Common myeloid progenitor, CD34-positive (primary cell): ENCODE measurements at regions of chr1 and their contacts with region 1.

Region 1: GRCh38 chr1:19240673-19241538 is 10.4 kb downstream of the EMC1 start:
- DNase-seq: peak; percentile 61 to 80 (median 77)
- H3K4me3 ChIP-seq: no peak overlapping the region
- H3K27ac ChIP-seq: peak overlapping the region in 1 of 2 experiments; percentile 67
- H3K4me1 ChIP-seq: peaks cover 0 to 2% (median under 1%) of the 10 kb centered on the region in 4 experiments
- H3K27me3 ChIP-seq: no peaks in the 10 kb centered on the region

Region 2: GRCh38 chr1:19087737-19088594 is 152.9 kb before region 1 on chr1:
- CTCF ChIA-PET with region 1: no interaction called
- POLR2A ChIA-PET with region 1: no interaction called
- DNase-seq: peak in 2 of 3 donors; percentile 25 to 36
- H3K4me3 ChIP-seq: no peak overlapping the region
- H3K27ac ChIP-seq: no peak overlapping the region
- H3K4me1 ChIP-seq: no peaks in the 10 kb centered on the region
- H3K27me3 ChIP-seq: no peaks in the 10 kb centered on the region

Region 3: DNA sequence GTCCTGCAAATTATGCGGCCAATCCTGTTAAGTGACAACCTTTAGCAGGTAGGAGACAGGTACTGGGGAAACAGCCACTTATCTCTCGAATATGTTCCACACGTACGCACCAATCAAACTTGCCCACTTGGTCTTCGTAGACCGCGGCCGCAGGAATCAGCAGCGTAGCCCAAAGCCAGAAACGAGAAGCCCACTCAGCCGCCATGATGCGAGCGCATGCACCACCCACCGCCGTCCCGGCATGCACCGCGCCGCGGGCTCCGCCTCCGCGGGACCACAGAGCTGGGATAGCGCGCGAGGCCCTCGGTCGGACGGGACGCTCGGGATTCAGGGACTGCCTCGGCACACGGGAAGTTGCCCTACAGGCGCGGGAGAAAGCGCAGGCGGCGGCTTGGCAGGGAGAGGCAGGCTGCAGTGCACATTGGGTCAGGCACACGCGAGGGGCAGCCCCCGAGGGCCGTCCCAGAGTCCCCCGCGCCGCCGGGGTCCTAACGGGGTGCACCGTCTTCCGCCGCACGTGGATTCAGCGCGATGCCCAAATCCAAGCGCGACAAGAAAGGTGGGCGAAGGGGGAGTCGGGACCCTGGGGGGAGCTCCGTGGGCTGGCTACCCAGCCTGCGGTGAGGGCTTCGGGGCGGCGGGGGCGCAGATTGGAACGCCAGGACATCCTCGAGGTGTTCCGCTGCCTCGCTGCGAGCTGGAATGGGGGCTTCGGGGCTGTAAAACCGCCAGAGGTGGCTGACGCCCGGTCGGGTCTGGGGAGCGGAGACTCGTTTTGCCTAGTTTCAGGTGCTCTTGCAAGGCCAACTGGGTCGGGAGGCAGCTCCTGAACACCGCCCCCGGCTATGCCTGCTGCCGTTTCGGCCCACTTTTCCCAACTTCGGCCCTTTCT is 10.6 kb after region 1 on chr1 and contains the starts of genes EMC1 and MRTO4:
- CTCF ChIA-PET with region 1: interaction called, 18 read pairs
- POLR2A ChIA-PET with region 1: no interaction called
- DNase-seq: peak; percentile 80 to 88 (median 87)
- H3K4me3 ChIP-seq: peak within 1 kb of the TSS; percentile 39 to 98 (median 94)
- H3K27ac ChIP-seq: peak within 1 kb of the TSS; percentile 91 to 97
- H3K4me1 ChIP-seq: peaks cover 18 to 37% (median 33%) of the 10 kb centered on the region in 4 experiments
- H3K27me3 ChIP-seq: no peaks in the 10 kb centered on the region

Region 4: DNA sequence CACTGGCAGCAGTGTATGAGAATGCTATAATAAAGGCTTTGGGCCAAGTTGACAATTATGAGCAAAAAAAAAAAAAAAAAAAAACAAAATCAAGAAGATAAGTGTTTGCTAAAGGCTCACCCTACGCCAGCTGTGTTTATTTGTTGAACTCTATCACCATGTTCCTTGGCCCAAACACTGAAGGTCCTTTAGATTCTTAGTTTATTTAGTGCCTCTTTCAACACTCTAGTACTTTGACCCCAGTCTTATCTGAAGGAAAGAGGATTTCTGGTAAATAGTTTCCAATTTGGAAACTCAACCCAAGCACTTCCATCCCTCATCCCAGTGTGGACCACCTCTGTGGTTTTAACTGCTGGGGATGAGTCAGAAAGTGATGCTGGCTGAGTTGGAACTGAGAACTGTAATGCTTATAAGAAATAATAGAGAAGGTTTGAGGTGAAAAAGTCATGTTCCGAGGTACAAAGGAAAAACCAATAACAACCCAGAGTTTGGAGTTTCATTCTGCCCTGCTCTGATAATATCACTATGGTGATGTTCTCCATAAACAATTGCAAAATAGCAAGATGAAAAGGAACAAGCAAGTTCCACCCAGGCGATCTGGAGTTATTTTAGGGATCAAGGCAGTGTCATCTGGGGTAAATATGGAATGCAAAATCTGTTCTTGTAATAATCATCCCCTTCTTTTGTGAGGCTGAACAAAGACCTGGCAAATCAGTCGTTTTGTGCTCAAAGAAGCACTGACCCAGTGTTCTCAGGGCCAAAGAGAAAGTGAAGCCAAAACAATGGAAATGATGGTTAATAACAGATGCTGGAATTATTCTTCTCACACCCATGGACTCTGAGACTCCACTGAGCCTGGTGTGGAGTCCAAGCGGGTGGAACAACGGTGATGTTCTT is 264.1 kb after region 1 on chr1:
- CTCF ChIA-PET with region 1: no interaction called
- POLR2A ChIA-PET with region 1: no interaction called
- DNase-seq: peak in 2 of 3 donors; percentile 59 to 66
- H3K4me3 ChIP-seq: peak overlapping the region in 2 of 7 experiments; percentile 2 to 43
- H3K27ac ChIP-seq: peak overlapping the region in 1 of 2 experiments; percentile 55
- H3K4me1 ChIP-seq: peaks cover 3 to 34% (median 25%) of the 10 kb centered on the region in 4 experiments
- H3K27me3 ChIP-seq: no peaks in the 10 kb centered on the region